ENCODE measurements at regions of chr3 and their contacts with region 1.

Region 1: GRCh38 chr3:27134165-27134796 is 234.9 kb downstream of the NEK10 start:
- DNase-seq: peak; percentile 68
- H3K4me3 ChIP-seq: no peak overlapping the region
- H3K27ac ChIP-seq: no peak overlapping the region
- H3K4me1 ChIP-seq: peaks cover 0 to 8% (median 0%) of the 10 kb centered on the region in 4 donors
- H3K27me3 ChIP-seq: no peaks in the 10 kb centered on the region
- CTCF ChIP-seq: peak; percentile 77 to 90 (median 89)
- EP300 ChIP-seq: no peak
- POLR2A ChIP-seq: no peak

Region 2: DNA sequence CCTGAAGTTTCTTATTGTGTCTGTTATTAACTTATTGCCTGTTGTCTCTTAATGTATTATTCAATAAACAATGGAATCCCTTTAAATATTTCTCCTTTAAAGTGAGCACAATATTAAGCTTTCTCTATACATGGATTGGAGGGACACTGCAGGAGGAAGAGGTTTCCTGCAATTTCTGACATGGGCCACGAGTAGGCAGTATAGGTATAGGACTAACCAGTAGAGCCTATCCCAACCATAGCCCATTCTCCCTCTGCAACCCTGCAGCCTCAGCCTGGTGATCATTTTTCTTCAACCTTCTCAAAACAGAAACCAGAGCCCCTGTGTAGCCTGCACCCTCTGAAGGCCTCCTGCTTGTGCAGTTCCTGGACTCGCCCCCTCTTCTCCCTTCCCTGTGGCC is 110.1 kb after region 1 on chr3:
- in situ Hi-C with region 1: loop called in 1 of 4 experiments (anchors 10 kb)
- intact Hi-C with region 1: no loop called
- DNase-seq: no peak
- H3K4me3 ChIP-seq: no peak overlapping the region
- H3K27ac ChIP-seq: no peak overlapping the region
- H3K4me1 ChIP-seq: peaks cover 0 to 3% (median 0%) of the 10 kb centered on the region in 4 donors
- H3K27me3 ChIP-seq: no peaks in the 10 kb centered on the region
- CTCF ChIP-seq: no peak
- EP300 ChIP-seq: no peak
- POLR2A ChIP-seq: no peak

Region 3: GRCh38 chr3:27253831-27254230 is 119.5 kb after region 1 on chr3:
- in situ Hi-C with region 1: loop called in 2 of 4 experiments (anchors 10 to 25 kb)
- intact Hi-C with region 1: no loop called
- DNase-seq: peak; percentile 38
- H3K4me3 ChIP-seq: no peak overlapping the region
- H3K27ac ChIP-seq: no peak overlapping the region
- H3K4me1 ChIP-seq: no peaks in the 10 kb centered on the region
- H3K27me3 ChIP-seq: no peaks in the 10 kb centered on the region
- CTCF ChIP-seq: peak; percentile 30 to 53 (median 39)
- EP300 ChIP-seq: no peak
- POLR2A ChIP-seq: no peak

Region 4: DNA sequence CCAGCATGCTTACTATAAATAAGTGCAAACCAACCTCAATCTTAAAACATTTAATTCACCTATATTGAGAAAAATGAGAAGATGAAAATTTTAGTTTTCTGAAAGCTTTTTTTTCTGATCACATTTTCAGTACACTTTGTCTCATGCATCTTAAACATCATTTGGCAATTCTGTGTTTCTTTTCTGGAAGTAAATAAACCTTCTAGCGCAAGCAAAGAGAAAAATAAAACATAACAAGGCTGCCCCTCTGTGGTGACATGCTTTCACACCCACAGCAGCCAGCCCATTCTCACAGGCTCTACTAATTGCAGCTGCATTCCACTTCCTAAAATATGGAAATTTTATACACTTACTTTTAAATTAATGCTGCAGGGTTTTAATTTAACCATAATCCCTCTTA is 144.8 kb after region 1 on chr3:
- in situ Hi-C with region 1: loop called in 2 of 4 experiments (anchors 10 to 25 kb)
- intact Hi-C with region 1: no loop called
- DNase-seq: no peak
- H3K4me3 ChIP-seq: no peak overlapping the region
- H3K27ac ChIP-seq: no peak overlapping the region
- H3K4me1 ChIP-seq: peaks cover 0 to 15% (median 2%) of the 10 kb centered on the region in 4 donors
- H3K27me3 ChIP-seq: no peaks in the 10 kb centered on the region
- CTCF ChIP-seq: peak; percentile 26 to 47 (median 32)
- EP300 ChIP-seq: no peak
- POLR2A ChIP-seq: no peak

Region 5: DNA sequence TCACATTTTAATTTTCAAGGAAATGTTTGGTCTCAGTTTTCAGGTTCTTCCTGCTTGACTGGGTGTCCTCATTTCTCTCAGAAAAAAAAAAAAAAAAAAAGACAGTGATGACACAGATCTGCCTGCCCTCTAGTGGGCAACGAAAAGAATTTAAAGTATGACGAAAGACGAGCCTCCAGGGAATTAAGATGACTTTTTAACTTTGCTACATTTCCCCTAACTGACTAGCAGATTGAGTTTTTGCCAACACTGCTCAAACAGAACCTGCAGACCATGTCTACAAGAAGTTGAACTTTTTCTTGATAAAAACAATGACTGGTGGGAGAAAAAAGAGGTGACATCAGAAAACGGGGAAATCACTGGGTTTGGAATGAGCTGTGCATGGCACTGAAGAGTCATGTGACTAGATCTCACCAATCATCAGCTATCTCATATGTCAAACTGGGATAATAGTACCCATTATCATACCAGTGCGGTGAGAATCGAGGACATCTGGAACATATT is 547.0 kb after region 1 on chr3:
- in situ Hi-C with region 1: loop called in 2 of 4 experiments (anchors 25 kb)
- intact Hi-C with region 1: no loop called
- DNase-seq: no peak
- H3K4me3 ChIP-seq: no peak overlapping the region
- H3K27ac ChIP-seq: peak overlapping the region in 2 of 4 donors; percentile 5 to 36
- H3K4me1 ChIP-seq: peaks cover 0 to 19% (median 6%) of the 10 kb centered on the region in 4 donors
- H3K27me3 ChIP-seq: no peaks in the 10 kb centered on the region
- CTCF ChIP-seq: peak; percentile 56 to 80 (median 64)
- EP300 ChIP-seq: no peak
- POLR2A ChIP-seq: no peak

Region 6: DNA sequence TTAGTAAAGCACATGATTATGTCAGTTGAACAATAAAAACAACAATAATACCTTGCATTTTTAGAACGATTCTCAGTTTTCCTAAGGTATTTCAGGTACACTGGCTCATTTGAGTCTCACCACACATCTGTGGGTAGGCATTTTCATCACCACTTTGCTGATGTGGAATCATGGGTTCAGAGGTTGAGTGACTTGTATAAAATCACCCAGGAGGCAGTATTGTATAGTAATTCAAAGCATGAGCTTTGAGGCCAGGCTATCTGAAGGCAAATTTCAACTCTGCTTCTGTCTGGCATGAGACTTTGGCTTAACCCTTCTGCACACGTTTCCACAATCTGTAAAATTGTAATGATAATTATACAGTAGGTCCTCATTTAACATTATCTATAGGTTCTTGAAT is 923.3 kb after region 1 on chr3:
- in situ Hi-C with region 1: no loop called
- intact Hi-C with region 1: no loop called
- DNase-seq: no peak
- H3K4me3 ChIP-seq: no peak overlapping the region
- H3K27ac ChIP-seq: no peak overlapping the region
- H3K4me1 ChIP-seq: no peaks in the 10 kb centered on the region
- H3K27me3 ChIP-seq: no peaks in the 10 kb centered on the region
- CTCF ChIP-seq: no peak
- EP300 ChIP-seq: no peak
- POLR2A ChIP-seq: no peak

Measured in transverse colon (tissue), 4 donors.